ENCODE measurements at regions of chr10 and their contacts with region 1.

Region 1: GRCh38 chr10:78047314-78047891 is 13.7 kb downstream of the RPS24 start:
- DNase-seq: peak; percentile 66 to 95 (median 86)
- ATAC-seq: peak; percentile 78 to 97 (median 91)
- H3K4me3 ChIP-seq: no peak overlapping the region
- H3K27ac ChIP-seq: no peak overlapping the region
- H3K4me1 ChIP-seq: no peaks in the 10 kb centered on the region
- H3K27me3 ChIP-seq: no peaks in the 10 kb centered on the region
- CTCF ChIP-seq: peak; percentile 72 to 88 (median 82)

Region 2: GRCh38 chr10:78458983-78459638 is 411.7 kb after region 1 on chr10:
- intact Hi-C with region 1: no loop called
- DNase-seq: peak in 3 of 6 donors; percentile 37 to 56 (median 50)
- ATAC-seq: peak; percentile 87 to 96 (median 92)
- H3K4me3 ChIP-seq: no peak overlapping the region
- H3K27ac ChIP-seq: peak overlapping the region in 2 of 4 donors; percentile 19 to 57
- H3K4me1 ChIP-seq: peaks cover 4 to 23% (median 13%) of the 10 kb centered on the region in 3 donors
- H3K27me3 ChIP-seq: no peaks in the 10 kb centered on the region
- CTCF ChIP-seq: no peak

Region 3: DNA sequence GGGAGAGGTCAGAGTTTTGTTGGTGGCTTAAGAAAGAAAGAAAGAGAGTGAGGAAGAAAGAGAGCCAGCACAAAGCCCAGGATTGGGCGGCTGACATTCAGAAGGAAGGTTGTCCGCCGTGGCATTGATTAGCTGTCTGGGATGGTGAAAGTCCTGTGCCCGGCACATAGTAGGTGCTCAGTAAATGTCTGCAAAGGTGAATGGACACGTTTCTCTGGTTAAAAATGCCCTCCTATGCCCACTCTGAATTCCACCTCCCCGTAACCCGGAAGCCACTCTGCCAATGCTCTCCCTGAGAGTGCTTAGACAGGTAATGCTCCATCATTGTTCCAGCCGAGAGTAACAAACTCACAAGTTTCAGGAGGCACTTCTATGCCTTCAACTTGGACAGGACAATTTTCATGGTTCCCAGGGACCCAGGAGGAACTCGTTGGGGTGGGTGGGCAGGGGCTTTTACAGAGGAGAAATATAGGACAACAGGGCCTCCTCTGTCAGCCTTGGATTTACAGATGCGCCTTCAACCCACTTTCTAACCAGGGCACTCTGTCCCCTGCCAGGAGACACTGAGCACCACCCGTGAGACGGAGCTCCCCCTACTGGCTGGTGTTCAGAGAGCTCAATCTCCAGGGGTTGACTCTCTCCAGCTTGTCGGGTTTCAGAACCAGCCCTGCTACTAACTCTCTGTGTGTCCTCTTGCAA is 609.9 kb after region 1 on chr10:
- intact Hi-C with region 1: loop called in 1 of 3 experiments (anchors 10 kb)
- DNase-seq: peak; percentile 65 to 90 (median 82)
- ATAC-seq: peak; percentile 94 to 99 (median 96)
- H3K4me3 ChIP-seq: no peak overlapping the region
- H3K27ac ChIP-seq: no peak overlapping the region
- H3K4me1 ChIP-seq: no peaks in the 10 kb centered on the region
- H3K27me3 ChIP-seq: no peaks in the 10 kb centered on the region
- CTCF ChIP-seq: peak; percentile 49 to 58 (median 56)

Region 4: GRCh38 chr10:79195091-79195923 is 1147.9 kb after region 1 on chr10:
- intact Hi-C with region 1: loop called in 2 of 3 experiments (anchors 5 kb)
- DNase-seq: peak; percentile 79 to 94 (median 90)
- ATAC-seq: peak; percentile 91 to 95 (median 93)
- H3K4me3 ChIP-seq: no peak overlapping the region
- H3K27ac ChIP-seq: peak overlapping the region in 3 of 4 donors; percentile 28 to 48 (median 35)
- H3K4me1 ChIP-seq: peaks cover 6 to 11% (median 7%) of the 10 kb centered on the region in 3 donors
- H3K27me3 ChIP-seq: no peaks in the 10 kb centered on the region
- CTCF ChIP-seq: peak; percentile 94 to 99 (median 96)

Region 5: GRCh38 chr10:79202188-79203013 is 1155.0 kb after region 1 on chr10:
- intact Hi-C with region 1: loop called in 2 of 3 experiments (anchors 5 kb)
- DNase-seq: peak in 1 of 6 donors; percentile 58
- ATAC-seq: peak in 3 of 4 donors; percentile 41 to 66 (median 55)
- H3K4me3 ChIP-seq: no peak overlapping the region
- H3K27ac ChIP-seq: no peak overlapping the region
- H3K4me1 ChIP-seq: no peaks in the 10 kb centered on the region
- H3K27me3 ChIP-seq: no peaks in the 10 kb centered on the region
- CTCF ChIP-seq: no peak

Measured in pancreas (tissue), 10 donors.